PC-3 (cell line): ENCODE measurements at regions of chr4 and their contacts with region 1.

Region 1: DNA sequence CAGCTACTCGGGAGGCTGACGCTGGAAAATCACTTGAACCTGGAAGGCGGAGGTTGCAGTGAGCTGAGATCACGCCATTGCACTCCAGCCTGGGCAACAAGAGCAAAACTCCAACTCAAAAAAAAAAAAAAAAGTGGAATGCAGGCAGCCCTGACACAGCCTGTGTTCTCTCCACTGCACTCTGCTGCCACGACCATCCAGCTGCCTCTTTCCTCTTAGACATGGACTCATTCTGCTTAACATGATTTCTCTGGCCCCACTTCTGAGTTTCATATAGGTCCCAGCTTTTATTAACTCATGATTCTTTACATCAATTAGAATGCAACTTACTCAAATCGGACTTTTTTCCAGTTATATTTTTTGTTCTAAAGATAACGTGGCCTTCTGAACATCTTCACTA is 29.6 kb downstream of the SLC10A6 start:
- DNase-seq: no peak
- ATAC-seq: no peak
- H3K4me3 ChIP-seq: no peak overlapping the region
- H3K27ac ChIP-seq: no peak overlapping the region
- H3K4me1 ChIP-seq: no peaks in the 10 kb centered on the region
- H3K27me3 ChIP-seq: no peaks in the 10 kb centered on the region
- CTCF ChIP-seq: no peak

Region 2: GRCh38 chr4:86522349-86522748 is 297.2 kb before region 1 on chr4:
- CTCF ChIA-PET with region 1: no interaction called
- POLR2A ChIA-PET with region 1: interaction called, 18 read pairs
- intact Hi-C with region 1: no loop called
- DNase-seq: peak; percentile 37
- ATAC-seq: peak; percentile 48; the same call in 1 of the 2 replicates
- H3K4me3 ChIP-seq: no peak overlapping the region
- H3K27ac ChIP-seq: peak overlapping the region; percentile 32
- H3K4me1 ChIP-seq: peaks cover 14% of the 10 kb centered on the region; the same call in 1 of the 2 replicates
- H3K27me3 ChIP-seq: no peaks in the 10 kb centered on the region
- CTCF ChIP-seq: peak; percentile 63